AG04449 (cell line): ENCODE measurements at regions of chr10 and their contacts with region 1.

Region 1: GRCh38 chr10:96089670-96090462 is 40.2 kb upstream of the ZNF518A start:
- DNase-seq: peak; percentile 74
- H3K4me3 ChIP-seq: peak overlapping the region; percentile 81
- CTCF ChIP-seq: no peak

Region 2: GRCh38 chr10:96034625-96035024 is 55.2 kb before region 1 on chr10:
- CTCF ChIA-PET with region 1: no interaction called
- POLR2A ChIA-PET with region 1: no interaction called
- DNase-seq: no peak
- H3K4me3 ChIP-seq: no peak overlapping the region
- CTCF ChIP-seq: no peak

Region 3: DNA sequence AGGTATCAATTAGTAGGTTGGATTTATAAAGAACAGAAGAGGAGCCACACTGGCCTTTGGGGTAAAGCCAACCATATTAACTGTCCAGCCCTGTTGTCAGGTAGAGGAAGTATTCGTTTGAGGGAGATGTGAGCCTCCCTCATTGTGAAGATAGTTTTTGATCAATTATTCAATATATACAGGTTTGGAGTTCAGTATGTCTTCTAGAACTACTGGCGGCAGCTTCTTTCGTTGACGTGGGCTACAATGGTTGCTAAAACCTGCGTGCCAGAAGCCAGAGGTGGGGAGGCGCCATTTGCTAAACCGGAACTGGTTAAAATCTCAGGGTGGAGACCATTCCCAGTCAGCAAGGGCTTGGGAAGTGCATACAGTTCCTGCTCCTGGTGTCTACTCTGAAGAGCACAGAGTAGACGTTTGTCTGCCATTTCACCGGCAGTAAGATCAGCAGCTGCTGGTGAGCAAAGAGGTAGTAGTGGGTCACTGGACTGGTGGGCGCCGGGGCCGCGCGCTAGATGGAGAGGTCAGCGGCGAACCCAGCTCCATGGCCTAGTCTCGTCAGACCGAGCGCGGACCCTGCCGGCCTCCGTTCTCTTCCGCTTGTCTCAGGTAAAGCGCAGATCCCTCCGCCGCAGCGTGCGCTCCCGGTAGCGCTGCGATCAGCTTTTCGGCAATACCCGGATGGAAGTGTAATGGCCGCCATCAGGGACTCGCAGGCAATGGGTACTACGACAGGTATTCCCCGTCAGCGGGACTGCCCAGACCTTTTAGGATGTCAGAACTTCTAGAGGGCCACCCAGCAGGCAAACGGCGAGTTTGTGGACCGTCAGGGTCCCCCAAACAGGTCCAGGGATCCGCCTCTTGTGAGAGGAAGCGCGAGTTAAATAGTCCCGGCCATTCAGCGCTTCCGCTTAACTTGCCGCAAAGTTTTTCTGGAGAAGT is 39.8 kb after region 1 on chr10 and contains the start of gene ZNF518A:
- CTCF ChIA-PET with region 1: interaction called, 3 read pairs
- POLR2A ChIA-PET with region 1: interaction called, 44 read pairs
- DNase-seq: peak; percentile 95
- H3K4me3 ChIP-seq: peak within 1 kb of the TSS; percentile 77
- CTCF ChIP-seq: no peak

Region 4: GRCh38 chr10:96168546-96168945 is 78.7 kb after region 1 on chr10:
- CTCF ChIA-PET with region 1: no interaction called
- POLR2A ChIA-PET with region 1: no interaction called
- DNase-seq: no peak
- H3K4me3 ChIP-seq: no peak overlapping the region
- CTCF ChIP-seq: no peak